ENCODE measurements at regions of chr17 and their contacts with region 1.

Region 1: DNA sequence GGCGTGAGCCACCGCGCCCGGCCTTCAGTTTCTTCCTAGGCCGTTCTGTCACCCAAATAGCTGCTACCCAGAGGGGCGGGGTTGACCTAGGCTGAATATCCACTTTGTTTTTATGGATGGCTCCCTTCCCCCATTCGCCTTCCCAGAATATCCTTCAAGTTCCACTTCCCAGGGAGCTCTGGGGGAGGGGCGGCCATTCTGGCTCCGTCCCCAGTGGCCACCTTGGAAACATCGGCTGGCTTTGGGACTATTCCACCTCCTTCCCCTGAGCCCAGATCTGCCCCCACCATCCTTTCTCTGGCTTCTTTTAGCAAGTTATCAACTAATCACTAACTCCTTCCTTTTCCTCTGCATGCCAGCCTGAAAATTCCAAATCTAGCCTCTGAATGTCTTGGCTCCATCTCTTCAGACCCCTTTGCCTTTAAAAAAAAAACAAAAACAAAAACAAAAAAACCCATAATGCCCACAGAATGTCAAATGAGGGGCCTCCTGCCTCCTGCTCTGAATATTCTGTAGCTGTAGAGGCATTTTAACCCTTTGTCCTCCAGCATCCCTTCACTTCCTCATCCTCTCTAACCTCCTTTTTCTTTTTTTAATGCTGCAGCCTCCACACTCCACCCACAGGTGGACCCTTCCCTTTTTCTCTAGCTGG is 6.4 kb downstream of the ATP1B2 start:
- DNase-seq: peak; percentile 94
- ATAC-seq: peak; percentile 91
- H3K4me3 Mint-ChIP-seq: peak overlapping the region; percentile 53
- H3K27ac Mint-ChIP-seq: peak overlapping the region; percentile 97
- H3K4me1 Mint-ChIP-seq: peaks cover 47% of the 10 kb centered on the region
- H3K27me3 Mint-ChIP-seq: peaks cover 14% of the 10 kb centered on the region
- CTCF ChIP-seq: no peak

Region 2: DNA sequence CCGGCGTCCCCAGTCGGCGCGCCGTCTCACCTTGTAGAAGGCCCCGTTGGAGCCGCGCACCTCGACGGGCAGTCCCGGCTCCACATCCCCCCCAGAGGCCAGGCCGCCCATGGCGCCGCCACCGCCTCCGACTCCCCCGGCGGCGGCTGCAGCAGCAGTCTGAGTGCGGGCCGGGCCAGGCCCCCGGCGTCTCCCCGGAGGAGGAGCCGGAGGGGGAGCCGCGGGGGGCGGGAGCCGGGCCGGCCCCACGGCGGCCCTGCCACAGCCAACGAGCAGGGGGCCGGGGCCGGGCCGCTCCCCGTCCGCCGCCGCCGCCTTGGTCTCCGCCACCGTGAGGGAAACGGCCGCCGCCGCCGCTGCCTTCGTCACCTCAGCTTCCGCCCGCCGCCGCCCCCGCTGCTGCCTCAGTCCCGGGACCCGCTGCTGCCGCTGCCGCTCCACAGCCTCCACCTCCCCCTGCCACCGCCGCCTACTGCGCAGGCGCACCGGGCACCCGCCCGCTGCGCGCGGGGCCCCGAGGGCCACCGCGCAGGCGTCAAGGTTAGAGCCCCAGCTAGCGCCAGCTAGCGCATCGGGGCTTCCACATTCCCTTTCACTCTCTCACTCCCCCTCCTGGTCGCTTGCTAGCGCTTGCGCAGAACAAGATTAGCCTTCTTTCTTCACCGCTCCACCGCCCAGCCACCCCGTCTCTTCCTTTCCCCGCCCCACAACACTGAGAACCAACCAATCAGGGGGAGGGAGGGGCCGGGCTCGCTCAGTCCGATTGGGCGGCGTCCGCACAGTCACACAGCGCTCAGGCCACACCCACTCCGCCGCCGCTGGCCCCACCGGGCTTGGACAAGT is 42.4 kb before region 1 on chr17 and contains the start of gene FXR2:
- CTCF ChIA-PET with region 1: interaction called, 13 read pairs
- POLR2A ChIA-PET with region 1: interaction called, 6 read pairs
- DNase-seq: peak; percentile 100
- ATAC-seq: peak; percentile 96
- H3K4me3 Mint-ChIP-seq: peak within 1 kb of the TSS; percentile 83
- H3K27ac Mint-ChIP-seq: peak within 1 kb of the TSS; percentile 99
- H3K4me1 Mint-ChIP-seq: peaks cover 22% of the 10 kb centered on the region
- H3K27me3 Mint-ChIP-seq: no peaks in the 10 kb centered on the region
- CTCF ChIP-seq: peak; percentile 36; the same call in 1 of the 2 replicates
- total RNA-seq, gene FXR2: 32.5 to 35.1 TPM (median 33.3 TPM) in 3 replicates

Region 3: GRCh38 chr17:7632492-7632894 is 24.6 kb before region 1 on chr17:
- CTCF ChIA-PET with region 1: interaction called, 88 read pairs
- POLR2A ChIA-PET with region 1: interaction called, 20 read pairs
- DNase-seq: peak; percentile 56
- ATAC-seq: peak; percentile 55
- H3K4me3 Mint-ChIP-seq: no peak overlapping the region
- H3K27ac Mint-ChIP-seq: no peak overlapping the region
- H3K4me1 Mint-ChIP-seq: peaks cover 35% of the 10 kb centered on the region
- H3K27me3 Mint-ChIP-seq: no peaks in the 10 kb centered on the region
- CTCF ChIP-seq: peak; percentile 28; the same call in 1 of the 2 replicates

Region 4: DNA sequence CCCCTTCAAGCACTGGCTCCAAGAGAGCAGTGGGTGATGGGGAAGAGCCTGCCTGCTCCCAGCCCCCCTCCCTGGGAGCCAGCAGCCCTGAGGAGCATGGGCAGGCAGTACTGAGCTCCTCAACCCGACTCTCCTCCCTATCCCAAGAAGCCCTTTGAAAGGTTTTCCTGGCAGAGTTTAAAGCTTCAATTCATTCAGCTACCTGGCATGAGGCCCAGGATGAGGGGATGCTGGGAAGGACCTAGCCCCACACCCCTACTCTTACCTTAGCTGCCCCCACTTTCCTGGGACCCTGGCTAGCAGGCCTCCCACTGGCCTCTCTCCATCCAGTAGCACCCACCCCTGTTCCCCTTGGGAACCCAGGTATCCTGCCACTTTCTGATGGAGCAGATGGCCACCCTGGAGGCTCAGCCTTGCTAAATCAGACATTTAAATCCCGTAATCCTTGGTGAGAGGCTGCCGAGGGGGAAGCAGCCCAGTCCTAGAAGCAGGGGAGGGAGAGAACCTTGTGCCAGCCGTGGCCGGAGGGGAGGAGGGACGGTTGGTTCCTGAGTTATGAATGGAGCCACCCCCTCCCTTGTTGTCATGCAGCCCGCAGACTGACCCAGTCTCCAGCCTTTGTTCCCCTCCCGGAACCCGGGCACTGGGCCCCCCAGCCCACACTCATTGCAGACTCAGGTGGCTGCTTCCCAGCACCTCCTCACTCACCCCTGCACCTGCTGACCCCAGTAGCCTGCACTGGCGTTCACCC is 10.7 kb after region 1 on chr17:
- CTCF ChIA-PET with region 1: interaction called, 40 read pairs
- POLR2A ChIA-PET with region 1: interaction called, 5 read pairs
- DNase-seq: no peak
- ATAC-seq: peak; percentile 33
- H3K4me3 Mint-ChIP-seq: no peak overlapping the region
- H3K27ac Mint-ChIP-seq: peak overlapping the region; percentile 84
- H3K4me1 Mint-ChIP-seq: peaks cover 12% of the 10 kb centered on the region
- H3K27me3 Mint-ChIP-seq: no peaks in the 10 kb centered on the region
- CTCF ChIP-seq: no peak

Region 5: GRCh38 chr17:7703584-7704479 is 46.7 kb after region 1 on chr17:
- CTCF ChIA-PET with region 1: interaction called, 4 read pairs
- POLR2A ChIA-PET with region 1: interaction called, 13 read pairs
- DNase-seq: peak; percentile 81
- ATAC-seq: peak; percentile 68
- H3K4me3 Mint-ChIP-seq: peak overlapping the region; percentile 86
- H3K27ac Mint-ChIP-seq: peak overlapping the region; percentile 88
- H3K4me1 Mint-ChIP-seq: peaks cover 30% of the 10 kb centered on the region
- H3K27me3 Mint-ChIP-seq: peaks cover 13% of the 10 kb centered on the region
- CTCF ChIP-seq: no peak

Region 6: DNA sequence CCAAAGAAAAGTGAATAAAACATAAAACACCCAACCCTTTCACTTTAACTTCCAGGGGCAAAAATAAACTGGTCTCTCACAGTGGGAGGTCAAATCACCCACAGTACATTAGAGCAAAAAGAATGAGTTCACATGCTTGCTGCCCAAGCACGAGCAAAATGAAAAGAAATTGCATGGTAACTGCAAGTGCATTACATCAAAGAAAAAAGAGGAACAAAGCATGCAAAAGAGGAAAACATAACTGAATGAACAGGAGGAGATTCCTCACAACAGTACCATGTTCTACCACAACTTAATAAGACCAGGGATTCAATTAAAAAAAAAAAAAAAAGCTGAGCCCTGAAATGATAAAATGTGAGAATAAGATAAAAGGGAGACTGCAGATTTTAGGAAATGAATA is 72.7 kb after region 1 on chr17:
- CTCF ChIA-PET with region 1: no interaction called
- POLR2A ChIA-PET with region 1: no interaction called
- DNase-seq: no peak
- ATAC-seq: no peak
- H3K4me3 Mint-ChIP-seq: no peak overlapping the region
- H3K27ac Mint-ChIP-seq: no peak overlapping the region
- H3K4me1 Mint-ChIP-seq: no peaks in the 10 kb centered on the region
- H3K27me3 Mint-ChIP-seq: peaks cover 13% of the 10 kb centered on the region
- CTCF ChIP-seq: no peak

Region 7: GRCh38 chr17:7745748-7746470 is 88.8 kb after region 1 on chr17:
- CTCF ChIA-PET with region 1: no interaction called
- POLR2A ChIA-PET with region 1: no interaction called
- DNase-seq: no peak
- ATAC-seq: no peak
- H3K4me3 Mint-ChIP-seq: no peak overlapping the region
- H3K27ac Mint-ChIP-seq: no peak overlapping the region
- H3K4me1 Mint-ChIP-seq: no peaks in the 10 kb centered on the region
- H3K27me3 Mint-ChIP-seq: peaks cover 6% of the 10 kb centered on the region
- CTCF ChIP-seq: no peak

Region 8: GRCh38 chr17:7803981-7804380 is 146.9 kb after region 1 on chr17:
- CTCF ChIA-PET with region 1: no interaction called
- POLR2A ChIA-PET with region 1: no interaction called
- DNase-seq: no peak
- ATAC-seq: peak; percentile 83
- H3K4me3 Mint-ChIP-seq: no peak overlapping the region
- H3K27ac Mint-ChIP-seq: peak overlapping the region; percentile 42; the same call in 1 of the 2 replicates
- H3K4me1 Mint-ChIP-seq: peaks cover 6% of the 10 kb centered on the region
- H3K27me3 Mint-ChIP-seq: peaks cover 3% of the 10 kb centered on the region
- CTCF ChIP-seq: no peak